ENCODE measurements at regions of chr4 and their contacts with region 1.

Region 1: DNA sequence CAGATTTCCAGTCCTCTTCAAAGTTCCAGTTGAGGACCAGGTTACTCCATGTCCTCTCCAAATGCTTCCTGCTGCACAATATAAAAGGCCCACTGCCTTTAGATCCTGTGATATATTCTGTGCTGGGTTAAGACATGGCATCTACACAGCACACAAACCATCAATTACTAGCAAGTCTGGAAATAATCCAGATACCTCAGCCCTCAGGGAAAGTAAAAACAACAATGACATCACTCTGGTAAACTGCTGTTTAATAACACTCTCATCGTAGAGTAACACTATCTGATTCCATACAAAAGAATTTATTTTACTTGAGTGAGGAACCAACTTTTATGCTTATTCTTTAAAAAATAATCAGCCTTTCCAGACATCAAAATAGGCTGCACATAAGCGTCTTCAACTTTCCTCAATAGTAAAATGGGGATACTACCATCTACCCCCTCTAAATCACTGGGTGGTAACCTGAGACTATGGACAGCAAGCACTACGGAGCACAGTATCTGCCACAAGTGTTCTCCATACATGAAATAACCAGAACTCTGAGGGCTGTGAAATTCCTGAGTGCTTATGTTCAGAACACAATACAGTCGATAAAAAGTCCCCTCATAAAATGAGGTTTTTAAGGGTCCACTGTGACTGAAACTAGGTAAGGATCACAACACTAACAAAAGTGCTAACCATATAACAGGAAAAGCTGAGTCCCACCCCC is 53.4 kb downstream of the ABCG2 start:
- DNase-seq: no peak
- H3K4me3 ChIP-seq: no peak overlapping the region
- H3K4me3 Mint-ChIP-seq: no peak overlapping the region
- H3K27ac Mint-ChIP-seq: peak overlapping the region; percentile 15
- H3K4me1 ChIP-seq: peaks cover 42% of the 10 kb centered on the region
- H3K4me1 Mint-ChIP-seq: peaks cover 27% of the 10 kb centered on the region
- H3K27me3 ChIP-seq: no peaks in the 10 kb centered on the region
- H3K27me3 Mint-ChIP-seq: no peaks in the 10 kb centered on the region
- CTCF ChIP-seq: no peak

Region 2: DNA sequence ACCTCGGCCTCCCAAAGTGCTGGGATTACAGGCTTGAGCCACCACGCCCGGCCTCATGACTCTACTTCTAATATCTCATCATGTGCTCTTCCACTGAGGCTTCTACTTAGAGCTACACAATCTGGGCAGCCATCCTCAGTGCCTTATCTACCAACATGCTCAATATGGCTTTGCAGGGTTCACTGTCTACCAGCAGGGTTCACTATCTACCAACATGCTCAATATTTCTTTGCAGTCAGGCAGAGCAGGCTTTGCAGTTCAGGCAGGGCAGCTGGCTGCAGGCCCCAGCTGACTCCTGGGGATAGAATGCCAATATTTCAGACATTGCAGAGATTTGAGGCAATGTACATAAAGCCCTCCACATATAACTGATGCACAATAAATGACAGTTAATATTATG is 50.2 kb before region 1 on chr4:
- CTCF ChIA-PET with region 1: interaction called, 4 read pairs
- POLR2A ChIA-PET with region 1: no interaction called
- intact Hi-C with region 1: loop called (anchors 2 kb)
- DNase-seq: peak; percentile 71
- H3K4me3 ChIP-seq: no peak overlapping the region
- H3K4me3 Mint-ChIP-seq: no peak overlapping the region
- H3K27ac Mint-ChIP-seq: no peak overlapping the region
- H3K4me1 ChIP-seq: no peaks in the 10 kb centered on the region
- H3K4me1 Mint-ChIP-seq: peaks cover 6% of the 10 kb centered on the region
- H3K27me3 ChIP-seq: no peaks in the 10 kb centered on the region
- H3K27me3 Mint-ChIP-seq: no peaks in the 10 kb centered on the region
- CTCF ChIP-seq: peak; percentile 63 to 80

Region 3: GRCh38 chr4:88063634-88064296 is 41.3 kb before region 1 on chr4:
- CTCF ChIA-PET with region 1: no interaction called
- POLR2A ChIA-PET with region 1: no interaction called
- intact Hi-C with region 1: loop called (anchors 2 kb)
- DNase-seq: no peak
- H3K4me3 ChIP-seq: no peak overlapping the region
- H3K4me3 Mint-ChIP-seq: no peak overlapping the region
- H3K27ac Mint-ChIP-seq: peak overlapping the region; percentile 69
- H3K4me1 ChIP-seq: peaks cover 45% of the 10 kb centered on the region
- H3K4me1 Mint-ChIP-seq: peaks cover 27% of the 10 kb centered on the region
- H3K27me3 ChIP-seq: no peaks in the 10 kb centered on the region
- H3K27me3 Mint-ChIP-seq: no peaks in the 10 kb centered on the region
- CTCF ChIP-seq: no peak

Region 4: DNA sequence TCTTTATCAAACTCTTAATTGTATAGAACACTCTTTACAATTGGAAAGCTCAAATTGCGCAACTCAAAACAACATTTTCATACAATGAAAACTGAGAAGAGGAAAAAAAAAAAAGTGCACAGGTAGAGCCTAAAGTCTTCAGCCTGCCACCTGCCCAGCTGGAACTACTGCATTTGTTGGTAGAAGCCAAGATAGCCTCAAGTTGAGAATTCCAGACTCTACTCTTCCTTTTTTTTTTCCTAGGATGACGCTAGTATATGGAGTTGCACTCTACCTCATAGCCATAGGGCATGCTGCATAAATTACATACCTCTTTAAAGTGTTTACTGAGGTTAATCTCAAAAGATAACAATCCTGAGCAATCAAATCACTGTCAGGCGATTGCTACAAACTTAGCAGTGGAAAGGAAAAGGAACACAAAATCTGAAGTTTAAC is 39.8 kb after region 1 on chr4:
- CTCF ChIA-PET with region 1: interaction called, 4 read pairs
- POLR2A ChIA-PET with region 1: no interaction called
- intact Hi-C with region 1: loop called (anchors 1 kb)
- DNase-seq: peak; percentile 77 to 83
- H3K4me3 ChIP-seq: no peak overlapping the region
- H3K4me3 Mint-ChIP-seq: peak overlapping the region; percentile 27
- H3K27ac Mint-ChIP-seq: peak overlapping the region; percentile 86
- H3K4me1 ChIP-seq: peaks cover 87% of the 10 kb centered on the region
- H3K4me1 Mint-ChIP-seq: peaks cover 65% of the 10 kb centered on the region
- H3K27me3 ChIP-seq: no peaks in the 10 kb centered on the region
- H3K27me3 Mint-ChIP-seq: no peaks in the 10 kb centered on the region
- CTCF ChIP-seq: no peak

Region 5: DNA sequence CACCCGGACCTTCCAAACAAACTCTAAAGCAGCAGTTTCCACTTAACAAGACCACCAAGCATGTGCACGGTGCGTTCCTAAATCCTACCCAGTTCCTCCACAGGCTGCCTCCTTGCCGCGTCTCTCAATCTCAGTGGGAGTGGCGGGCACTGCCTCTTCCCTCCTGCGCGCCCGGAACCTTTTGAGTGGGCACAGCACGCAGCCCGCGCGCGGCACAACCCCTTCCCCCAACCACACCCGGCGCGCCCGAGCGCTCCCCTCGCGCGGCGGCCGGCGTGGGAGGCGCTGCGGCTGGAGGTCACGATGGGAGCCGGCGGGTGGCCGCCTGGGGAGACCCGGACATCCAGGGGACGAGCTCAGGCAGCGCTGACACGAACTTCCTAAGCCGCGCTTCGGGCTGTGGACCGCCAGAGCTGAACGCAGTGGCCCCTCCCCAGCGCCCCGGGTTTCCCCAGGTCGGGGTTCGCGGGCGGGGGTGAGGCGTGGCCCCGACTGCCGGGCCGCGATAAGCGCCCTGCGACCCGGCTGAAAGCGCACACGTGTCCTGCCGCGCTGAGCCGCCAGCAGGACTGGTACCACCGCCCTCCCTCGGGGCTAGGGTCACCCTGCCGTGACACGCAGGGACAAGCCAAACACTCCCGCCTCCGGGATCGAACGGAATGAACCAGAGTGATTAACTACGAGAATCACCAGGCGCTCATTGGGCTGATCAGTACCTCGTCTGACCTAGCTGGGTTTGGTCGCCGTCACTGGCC is 53.6 kb after region 1 on chr4 and contains the start of gene ABCG2:
- CTCF ChIA-PET with region 1: no interaction called
- POLR2A ChIA-PET with region 1: interaction called, 5 read pairs
- intact Hi-C with region 1: loop called (anchors 1 kb)
- DNase-seq: peak; percentile 77 to 83
- H3K4me3 ChIP-seq: peak within 1 kb of the TSS; percentile 85
- H3K4me3 Mint-ChIP-seq: peak within 1 kb of the TSS; percentile 80
- H3K27ac Mint-ChIP-seq: peak within 1 kb of the TSS; percentile 67
- H3K4me1 ChIP-seq: peaks cover 20% of the 10 kb centered on the region
- H3K4me1 Mint-ChIP-seq: peaks cover 9% of the 10 kb centered on the region
- H3K27me3 ChIP-seq: no peaks in the 10 kb centered on the region
- H3K27me3 Mint-ChIP-seq: no peaks in the 10 kb centered on the region
- CTCF ChIP-seq: no peak
- total RNA-seq, gene ABCG2: 23.7 and 26.0 TPM in 2 replicates

Region 6: GRCh38 chr4:88189881-88190532 is 85.0 kb after region 1 on chr4:
- CTCF ChIA-PET with region 1: no interaction called
- POLR2A ChIA-PET with region 1: no interaction called
- intact Hi-C with region 1: loop called (anchors 1 kb)
- DNase-seq: peak; percentile 50 to 72
- H3K4me3 ChIP-seq: no peak overlapping the region
- H3K4me3 Mint-ChIP-seq: peak overlapping the region; percentile 34
- H3K27ac Mint-ChIP-seq: peak overlapping the region; percentile 50
- H3K4me1 ChIP-seq: peaks cover 23% of the 10 kb centered on the region
- H3K4me1 Mint-ChIP-seq: peaks cover 21% of the 10 kb centered on the region
- H3K27me3 ChIP-seq: no peaks in the 10 kb centered on the region
- H3K27me3 Mint-ChIP-seq: no peaks in the 10 kb centered on the region
- CTCF ChIP-seq: no peak

Region 7: DNA sequence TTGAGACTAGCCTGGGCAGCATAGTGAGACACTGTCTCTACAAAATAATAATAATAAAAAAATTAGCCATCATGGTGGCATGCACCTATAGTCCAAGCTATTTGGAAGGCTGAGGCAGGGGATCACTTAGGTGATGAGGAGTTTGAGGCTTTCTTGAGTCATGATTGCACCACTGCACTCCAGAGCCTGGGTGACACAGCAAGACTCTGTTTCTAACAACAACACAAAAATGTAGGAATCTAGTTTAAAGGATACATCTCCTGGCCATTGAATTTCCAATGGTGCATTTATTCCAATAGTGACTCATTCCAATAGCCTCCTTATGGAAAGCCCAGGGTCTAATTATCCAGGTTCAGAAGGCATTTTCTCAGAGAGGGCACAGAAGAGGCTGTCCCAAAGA is 251.7 kb after region 1 on chr4:
- CTCF ChIA-PET with region 1: no interaction called
- POLR2A ChIA-PET with region 1: no interaction called
- intact Hi-C with region 1: no loop called
- DNase-seq: no peak
- H3K4me3 ChIP-seq: no peak overlapping the region
- H3K4me3 Mint-ChIP-seq: no peak overlapping the region
- H3K27ac Mint-ChIP-seq: no peak overlapping the region
- H3K4me1 ChIP-seq: peaks cover 8% of the 10 kb centered on the region
- H3K4me1 Mint-ChIP-seq: peaks cover 7% of the 10 kb centered on the region
- H3K27me3 ChIP-seq: no peaks in the 10 kb centered on the region
- H3K27me3 Mint-ChIP-seq: no peaks in the 10 kb centered on the region
- CTCF ChIP-seq: no peak